Prostate gland (tissue), 2 donors: ENCODE measurements at regions of chr4 and their contacts with region 1.

Region 1: GRCh38 chr4:156763511-156763910 is 208.1 kb downstream of the PDGFC start:
- DNase-seq: no peak
- H3K4me3 ChIP-seq: no peak overlapping the region
- H3K27ac ChIP-seq: no peak overlapping the region
- H3K4me1 ChIP-seq: no peaks in the 10 kb centered on the region
- H3K27me3 ChIP-seq: no peaks in the 10 kb centered on the region
- CTCF ChIP-seq: no peak
- POLR2A ChIP-seq: no peak

Region 2: DNA sequence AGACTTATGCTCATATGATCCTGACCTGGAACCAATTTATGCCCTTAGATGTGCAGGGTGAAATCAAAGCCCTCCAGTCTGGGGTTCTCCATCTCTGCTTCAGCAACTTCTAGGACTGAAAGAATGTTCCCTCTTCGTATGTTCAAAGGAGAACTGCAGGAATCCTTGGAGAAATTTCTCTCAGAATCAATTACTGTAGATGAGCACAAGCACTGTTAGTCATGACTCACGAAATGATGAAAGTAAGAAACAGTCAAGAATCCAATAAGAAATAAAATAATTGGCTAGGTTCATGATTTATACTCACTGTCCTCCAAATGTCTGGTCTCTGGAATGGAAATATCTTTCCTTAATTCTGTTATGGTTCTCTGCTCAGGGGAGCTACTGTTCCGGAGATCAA is 140.1 kb before region 1 on chr4:
- intact Hi-C with region 1: no loop called
- DNase-seq: no peak
- H3K4me3 ChIP-seq: no peak overlapping the region
- H3K27ac ChIP-seq: no peak overlapping the region
- H3K4me1 ChIP-seq: no peaks in the 10 kb centered on the region
- H3K27me3 ChIP-seq: no peaks in the 10 kb centered on the region
- CTCF ChIP-seq: no peak
- POLR2A ChIP-seq: no peak

Region 3: DNA sequence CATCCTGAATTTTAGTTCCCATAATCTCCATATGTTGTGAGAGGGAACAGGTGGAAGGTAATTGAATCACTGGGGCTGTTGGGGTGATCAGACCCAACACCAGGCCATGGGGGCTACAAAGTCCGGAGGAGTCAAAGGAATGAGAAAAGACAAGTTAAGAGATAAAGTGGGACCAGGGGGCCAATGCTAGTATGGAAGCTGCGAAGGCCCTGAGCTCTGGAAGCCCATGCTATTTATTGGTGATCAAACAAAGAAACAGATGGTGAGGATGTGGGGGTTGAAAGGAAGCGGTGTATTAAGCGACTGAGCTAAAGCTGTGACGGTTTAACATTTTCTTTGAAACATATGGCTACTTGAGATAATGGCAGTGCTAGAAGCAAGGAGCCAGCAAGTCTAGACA is 75.2 kb after region 1 on chr4:
- intact Hi-C with region 1: no loop called
- DNase-seq: no peak
- H3K4me3 ChIP-seq: no peak overlapping the region
- H3K27ac ChIP-seq: no peak overlapping the region
- H3K4me1 ChIP-seq: no peaks in the 10 kb centered on the region
- H3K27me3 ChIP-seq: no peaks in the 10 kb centered on the region
- CTCF ChIP-seq: no peak
- POLR2A ChIP-seq: no peak

Region 4: DNA sequence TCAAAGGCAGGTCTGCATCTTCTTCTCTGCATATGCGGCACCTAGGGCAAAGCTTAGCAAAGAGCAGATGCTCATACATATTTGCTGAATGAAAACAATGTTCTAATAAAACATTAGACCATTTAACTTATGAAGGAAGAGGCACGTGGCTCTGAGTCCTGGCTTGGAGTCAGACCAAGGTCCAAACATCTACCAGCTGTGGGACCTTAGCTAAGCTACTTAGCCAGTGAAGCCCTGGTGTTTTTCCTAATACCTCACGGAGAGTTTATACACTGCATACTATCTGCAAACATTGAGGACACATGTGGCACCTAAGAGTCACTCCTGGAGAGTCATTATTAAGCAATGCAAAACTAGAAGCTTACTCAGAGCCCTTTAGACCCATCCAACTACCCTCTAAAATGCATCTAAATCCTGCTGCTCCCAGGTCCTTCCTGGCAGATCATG is 199.0 kb after region 1 on chr4:
- intact Hi-C with region 1: loop called (anchors 5 kb)
- DNase-seq: no peak
- H3K4me3 ChIP-seq: no peak overlapping the region
- H3K27ac ChIP-seq: peak overlapping the region in 1 of 2 donors; percentile 6
- H3K4me1 ChIP-seq: no peaks in the 10 kb centered on the region
- H3K27me3 ChIP-seq: no peaks in the 10 kb centered on the region
- CTCF ChIP-seq: no peak
- POLR2A ChIP-seq: no peak